SK-N-SH (cell line): ENCODE measurements at regions of chr4 and their contacts with region 1.

Region 1: DNA sequence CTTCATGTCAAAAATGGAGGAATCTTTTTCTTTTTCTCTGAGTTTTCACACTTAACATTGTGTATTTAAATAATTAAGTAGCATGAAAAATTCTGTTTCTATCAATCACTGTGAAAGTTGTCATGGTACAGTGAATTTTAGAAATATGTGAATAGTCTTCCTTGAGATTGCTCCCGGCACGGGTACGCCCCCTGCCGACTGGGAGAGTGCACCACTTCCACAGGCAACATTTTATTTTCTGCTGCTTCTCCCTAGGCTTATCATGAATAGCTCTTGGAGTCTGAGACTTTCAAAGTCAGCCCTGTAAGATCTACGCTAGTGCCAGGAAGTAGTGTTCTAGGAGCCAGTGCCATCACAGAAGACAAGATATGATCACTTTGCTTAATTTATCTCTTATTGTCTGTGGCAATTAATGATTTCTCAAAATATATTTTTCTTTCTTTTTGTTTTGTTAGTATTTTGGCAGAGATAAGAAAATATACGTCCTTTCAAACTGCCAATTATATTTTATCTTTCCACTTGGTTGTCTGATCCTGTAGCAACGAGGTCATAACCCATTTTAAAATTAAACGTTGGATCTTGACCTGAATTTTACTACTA is 763.8 kb upstream of the AADAT start:
- DNase-seq: peak; percentile 33
- H3K4me3 ChIP-seq: peak overlapping the region in 1 of 2 experiments; percentile 14; a peak in 1 of 4 replicates
- H3K27ac ChIP-seq: no peak overlapping the region
- H3K4me1 ChIP-seq: no peaks in the 10 kb centered on the region
- H3K27me3 ChIP-seq: no peaks in the 10 kb centered on the region
- CTCF ChIP-seq: peak; percentile 94
- EP300 ChIP-seq: no peak
- RAD21 ChIP-seq: peak; percentile 85

Region 2: GRCh38 chr4:170589597-170590191 is 263.8 kb before region 1 on chr4:
- CTCF ChIA-PET with region 1: interaction called, 33 read pairs
- POLR2A ChIA-PET with region 1: no interaction called
- DNase-seq: peak; percentile 41
- H3K4me3 ChIP-seq: no peak overlapping the region
- H3K27ac ChIP-seq: no peak overlapping the region
- H3K4me1 ChIP-seq: no peaks in the 10 kb centered on the region
- H3K27me3 ChIP-seq: no peaks in the 10 kb centered on the region
- CTCF ChIP-seq: peak; percentile 66
- EP300 ChIP-seq: no peak
- RAD21 ChIP-seq: peak; percentile 84

Region 3: DNA sequence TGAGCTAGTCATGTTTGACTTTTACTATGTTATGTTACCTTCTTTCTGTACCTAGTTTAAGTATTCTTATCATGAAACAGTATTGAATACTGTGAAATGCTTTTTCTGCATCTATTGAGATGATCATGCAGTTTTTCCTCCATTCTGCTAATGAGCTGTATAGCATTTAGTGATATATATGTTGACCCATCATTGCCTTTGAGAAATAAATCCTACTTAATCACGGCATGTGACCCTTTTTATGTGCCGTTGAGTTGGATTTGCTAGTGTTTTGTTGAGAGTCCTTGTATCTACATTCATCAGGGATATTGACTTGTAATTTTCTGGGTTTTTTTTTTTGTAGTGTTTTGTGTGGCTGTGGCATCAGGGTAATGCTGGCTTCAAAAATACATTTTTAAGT is 226.1 kb before region 1 on chr4:
- CTCF ChIA-PET with region 1: no interaction called
- POLR2A ChIA-PET with region 1: no interaction called
- DNase-seq: no peak
- H3K4me3 ChIP-seq: no peak overlapping the region
- H3K27ac ChIP-seq: no peak overlapping the region
- H3K4me1 ChIP-seq: peaks cover 0 to 2% of the 10 kb centered on the region in 2 experiments; a peak in 2 of 4 replicates
- H3K27me3 ChIP-seq: no peaks in the 10 kb centered on the region
- CTCF ChIP-seq: no peak
- EP300 ChIP-seq: no peak
- RAD21 ChIP-seq: no peak